CD4-positive, alpha-beta T cell (primary cell): ENCODE measurements at regions of chr9 and their contacts with region 1.

Region 1: DNA sequence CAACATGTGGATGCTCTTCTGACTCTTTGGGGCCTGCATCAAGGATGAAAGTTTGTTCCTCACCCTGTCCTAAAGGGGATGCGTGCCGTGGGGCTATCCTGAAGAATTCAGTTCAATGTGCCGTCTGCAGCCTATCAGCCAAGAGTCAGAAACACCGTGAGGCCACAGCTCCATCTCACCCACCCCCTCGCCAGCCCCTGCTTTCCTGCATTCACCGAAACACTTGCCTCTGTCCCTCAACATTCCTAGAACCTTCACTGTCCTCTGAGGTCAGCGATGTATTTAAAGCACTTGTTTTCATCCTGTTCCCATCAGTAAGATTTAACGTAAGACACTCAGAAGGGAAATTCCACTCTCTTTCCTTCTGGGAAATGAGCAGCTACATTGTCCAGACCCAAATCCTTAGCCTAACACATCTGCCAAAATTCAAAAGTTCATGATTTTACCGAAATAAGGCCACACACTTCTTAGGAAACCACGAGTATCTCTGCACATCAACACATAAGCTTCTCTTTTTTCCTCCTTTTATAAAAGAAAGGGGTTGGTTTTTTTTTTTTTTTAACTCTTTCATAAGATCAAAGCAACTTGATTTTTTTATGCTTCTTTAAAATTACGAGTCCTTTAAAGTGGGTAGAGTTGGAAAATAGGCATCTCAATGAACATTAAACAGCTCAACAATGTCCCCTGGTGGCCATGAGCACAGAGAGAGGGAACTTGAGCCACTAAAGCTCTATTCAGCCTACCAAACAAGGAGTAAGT is 100.7 kb downstream of the SUSD1 start:
- DNase-seq: peak; percentile 49 to 86 (median 66)
- ATAC-seq: peak; percentile 91
- H3K4me3 ChIP-seq: no peak overlapping the region
- H3K4me3 Mint-ChIP-seq: peak overlapping the region; percentile 17
- H3K27ac ChIP-seq: no peak overlapping the region
- H3K27ac Mint-ChIP-seq: peak overlapping the region; percentile 16
- H3K4me1 ChIP-seq: peaks cover 26% of the 10 kb centered on the region
- H3K4me1 Mint-ChIP-seq: peaks cover 33% of the 10 kb centered on the region
- H3K27me3 ChIP-seq: no peaks in the 10 kb centered on the region
- H3K27me3 Mint-ChIP-seq: no peaks in the 10 kb centered on the region
- CTCF ChIP-seq: peak; percentile 96

Region 2: DNA sequence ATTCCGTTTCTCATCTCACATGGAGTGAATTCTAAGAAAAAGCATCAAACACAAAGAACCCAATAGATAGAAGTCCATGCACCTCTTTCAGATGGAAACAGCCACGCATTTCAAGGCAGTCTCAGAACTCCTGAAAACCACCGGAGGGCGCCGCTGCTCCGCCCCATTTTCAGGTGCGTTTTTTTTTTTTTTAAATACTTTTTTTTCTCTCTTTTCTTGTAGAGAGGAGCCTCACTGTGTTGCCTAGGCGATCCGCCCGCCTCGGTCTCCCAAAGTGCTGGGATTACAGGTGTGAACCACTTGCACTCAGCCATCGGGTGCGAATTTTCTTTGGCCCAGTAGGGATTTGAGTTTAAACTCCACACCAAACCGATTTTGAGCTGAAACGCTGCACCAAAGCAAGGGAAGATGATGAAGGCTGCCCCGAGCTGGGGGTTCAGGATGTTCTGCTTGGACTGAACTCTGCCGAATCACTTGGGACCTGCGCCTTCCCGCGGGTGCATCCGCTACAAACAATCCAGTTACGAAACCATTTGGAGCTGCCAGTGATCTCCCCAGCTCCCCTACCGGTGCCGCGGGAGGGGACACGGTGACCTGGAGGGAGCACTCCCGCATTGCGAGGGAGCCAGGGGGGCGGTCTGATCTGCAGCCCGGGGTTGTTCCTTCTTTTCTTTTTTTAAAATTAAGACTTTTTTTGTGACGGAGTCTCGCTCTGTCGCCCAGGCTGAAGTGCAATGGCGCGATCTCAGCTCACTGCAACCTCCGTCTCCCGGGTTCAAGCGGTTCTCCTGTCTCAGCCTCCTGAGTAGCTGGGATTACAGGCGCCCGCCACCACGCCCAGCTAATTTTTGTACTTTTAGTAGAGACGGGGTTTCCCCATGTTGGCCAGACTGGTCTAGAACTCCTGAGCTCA is 476.4 kb before region 1 on chr9:
- CTCF ChIA-PET with region 1: interaction called, 10 read pairs
- POLR2A ChIA-PET with region 1: interaction called, 4 read pairs
- intact Hi-C with region 1: loop called (anchors 1 to 2 kb)
- DNase-seq: peak; percentile 29 to 84 (median 59)
- ATAC-seq: peak; percentile 75
- H3K4me3 ChIP-seq: peak overlapping the region; percentile 61
- H3K4me3 Mint-ChIP-seq: peak overlapping the region; percentile 94
- H3K27ac ChIP-seq: no peak overlapping the region
- H3K27ac Mint-ChIP-seq: peak overlapping the region; percentile 62
- H3K4me1 ChIP-seq: peaks cover 24% of the 10 kb centered on the region
- H3K4me1 Mint-ChIP-seq: peaks cover 34% of the 10 kb centered on the region
- H3K27me3 ChIP-seq: peaks cover 24 to 28% of the 10 kb centered on the region in 2 experiments
- H3K27me3 Mint-ChIP-seq: peaks cover 47% of the 10 kb centered on the region
- CTCF ChIP-seq: peak; percentile 78

Region 3: DNA sequence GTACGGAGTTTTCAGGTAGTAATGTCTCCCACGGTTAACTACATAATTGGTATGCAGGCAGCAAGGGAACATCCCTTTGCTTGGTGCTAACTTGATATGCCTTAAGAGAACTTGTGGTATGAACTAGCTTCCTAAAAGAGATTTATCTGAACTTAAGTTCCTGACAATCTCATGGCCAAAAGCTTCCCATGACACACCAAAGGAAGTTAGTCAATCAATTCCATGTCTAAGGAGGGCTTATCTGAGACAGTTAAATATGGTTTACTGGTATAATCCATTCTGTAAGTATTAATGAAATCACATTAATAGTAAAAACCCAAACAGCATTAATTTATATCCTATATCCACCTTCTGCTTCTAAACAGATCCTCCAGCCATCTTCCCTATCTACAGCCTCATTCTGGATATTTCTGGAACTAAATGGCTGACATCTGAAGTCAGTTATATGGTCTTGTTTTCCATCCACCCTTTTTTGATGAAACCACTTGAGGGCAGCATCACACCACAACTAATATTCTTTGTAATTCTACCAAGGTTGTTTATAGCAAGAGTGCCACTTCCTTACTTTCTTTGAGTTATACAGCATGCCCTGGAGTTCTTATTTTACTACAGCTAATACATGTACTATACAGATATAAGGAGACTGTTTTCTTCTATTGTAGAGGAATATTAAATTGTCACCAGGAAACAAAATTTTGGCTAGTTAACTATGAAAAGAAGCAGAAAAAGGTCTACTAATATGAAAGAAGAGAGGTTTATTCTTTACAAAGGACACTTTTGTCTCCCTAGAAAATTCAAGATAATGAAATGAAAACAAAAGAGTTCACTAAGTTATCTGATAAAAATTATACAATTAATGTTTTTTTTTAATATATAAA is 314.4 kb before region 1 on chr9:
- CTCF ChIA-PET with region 1: interaction called, 31 read pairs
- POLR2A ChIA-PET with region 1: interaction called, 7 read pairs
- intact Hi-C with region 1: loop called (anchors 1 kb)
- DNase-seq: peak in 12 of 14 experiments; percentile 6 to 81 (median 32)
- ATAC-seq: peak; percentile 85
- H3K4me3 ChIP-seq: no peak overlapping the region
- H3K4me3 Mint-ChIP-seq: no peak overlapping the region
- H3K27ac ChIP-seq: no peak overlapping the region
- H3K27ac Mint-ChIP-seq: no peak overlapping the region
- H3K4me1 ChIP-seq: no peaks in the 10 kb centered on the region
- H3K4me1 Mint-ChIP-seq: peaks cover 5% of the 10 kb centered on the region
- H3K27me3 ChIP-seq: no peaks in the 10 kb centered on the region
- H3K27me3 Mint-ChIP-seq: no peaks in the 10 kb centered on the region
- CTCF ChIP-seq: peak; percentile 88

Region 4: GRCh38 chr9:111902396-111903147 is 171.9 kb before region 1 on chr9:
- CTCF ChIA-PET with region 1: interaction called, 3 read pairs
- POLR2A ChIA-PET with region 1: interaction called, 24 read pairs
- intact Hi-C with region 1: loop called (anchors 5 to 10 kb)
- DNase-seq: no peak
- ATAC-seq: no peak
- H3K4me3 ChIP-seq: no peak overlapping the region
- H3K4me3 Mint-ChIP-seq: no peak overlapping the region
- H3K27ac ChIP-seq: no peak overlapping the region
- H3K27ac Mint-ChIP-seq: no peak overlapping the region
- H3K4me1 ChIP-seq: peaks cover 51% of the 10 kb centered on the region
- H3K4me1 Mint-ChIP-seq: peaks cover 35% of the 10 kb centered on the region
- H3K27me3 ChIP-seq: no peaks in the 10 kb centered on the region
- H3K27me3 Mint-ChIP-seq: no peaks in the 10 kb centered on the region
- CTCF ChIP-seq: no peak

Region 5: DNA sequence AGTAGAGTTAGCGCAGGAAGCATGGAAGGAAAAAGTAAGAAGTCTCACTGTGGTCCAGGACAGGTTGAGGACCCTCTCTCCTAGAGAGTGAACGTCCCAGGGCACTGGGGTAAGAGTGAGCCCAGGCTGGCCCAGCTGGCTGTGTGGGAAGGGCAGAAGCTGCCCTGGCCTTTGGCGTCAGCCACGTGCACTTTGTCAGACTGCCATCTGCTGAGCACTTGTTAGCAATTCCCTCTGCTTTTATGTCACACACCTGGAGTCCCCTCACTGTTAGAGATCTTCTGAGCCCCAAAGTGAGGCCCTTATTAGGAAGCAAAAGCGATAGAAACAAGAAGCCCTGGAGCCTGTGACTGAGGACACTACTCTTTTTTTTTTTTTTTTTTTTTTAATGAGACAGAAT is 98.7 kb before region 1 on chr9:
- CTCF ChIA-PET with region 1: no interaction called
- POLR2A ChIA-PET with region 1: no interaction called
- intact Hi-C with region 1: loop called in 1 of 2 experiments (anchors 5 kb)
- DNase-seq: peak in 6 of 14 experiments; percentile 12 to 51 (median 37)
- ATAC-seq: no peak
- H3K4me3 ChIP-seq: no peak overlapping the region
- H3K4me3 Mint-ChIP-seq: no peak overlapping the region
- H3K27ac ChIP-seq: no peak overlapping the region
- H3K27ac Mint-ChIP-seq: no peak overlapping the region
- H3K4me1 ChIP-seq: peaks cover 5% of the 10 kb centered on the region
- H3K4me1 Mint-ChIP-seq: peaks cover 12% of the 10 kb centered on the region
- H3K27me3 ChIP-seq: no peaks in the 10 kb centered on the region
- H3K27me3 Mint-ChIP-seq: no peaks in the 10 kb centered on the region
- CTCF ChIP-seq: no peak

Region 6: DNA sequence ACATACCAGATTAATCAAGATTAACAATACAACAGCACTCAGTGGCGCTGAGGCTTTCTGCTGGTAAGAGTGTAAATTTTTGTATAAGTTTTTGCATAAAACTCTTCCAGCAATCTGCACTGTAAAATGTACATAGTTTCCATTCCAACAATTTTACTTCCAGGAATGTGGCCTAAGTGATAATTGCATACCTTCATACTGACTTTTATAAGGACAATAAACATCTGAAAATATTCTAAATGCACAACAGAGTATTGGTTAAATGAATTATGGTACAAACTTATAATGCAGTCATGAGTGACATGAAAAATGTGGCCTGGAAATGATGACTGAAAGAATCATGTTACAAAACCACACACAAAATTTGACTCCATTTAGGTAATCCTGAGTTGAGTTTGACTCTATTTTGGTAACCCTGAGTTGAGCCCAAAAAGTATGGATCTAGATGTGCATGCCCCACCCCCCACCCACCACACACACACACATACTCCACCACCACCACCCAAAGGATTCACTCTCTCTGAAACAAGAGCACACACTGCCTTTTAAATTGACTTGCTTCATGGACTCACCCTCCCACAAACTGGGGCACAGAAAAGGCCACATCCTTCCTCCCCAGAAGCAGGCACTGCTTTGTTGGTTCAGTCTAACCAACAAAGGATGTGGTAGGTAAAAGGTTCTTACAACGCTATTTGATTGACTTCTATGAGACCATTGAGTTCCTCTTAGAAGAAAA is 37.0 kb before region 1 on chr9:
- CTCF ChIA-PET with region 1: interaction called, 4 read pairs
- POLR2A ChIA-PET with region 1: interaction called, 6 read pairs
- intact Hi-C with region 1: loop called in 1 of 2 experiments (anchors 5 kb)
- DNase-seq: peak; percentile 37 to 93 (median 62)
- ATAC-seq: peak; percentile 98
- H3K4me3 ChIP-seq: peak overlapping the region; percentile 9
- H3K4me3 Mint-ChIP-seq: peak overlapping the region; percentile 82
- H3K27ac ChIP-seq: no peak overlapping the region
- H3K27ac Mint-ChIP-seq: peak overlapping the region; percentile 68
- H3K4me1 ChIP-seq: peaks cover 54% of the 10 kb centered on the region
- H3K4me1 Mint-ChIP-seq: peaks cover 67% of the 10 kb centered on the region
- H3K27me3 ChIP-seq: no peaks in the 10 kb centered on the region
- H3K27me3 Mint-ChIP-seq: peaks cover 4% of the 10 kb centered on the region
- CTCF ChIP-seq: no peak

Region 7: GRCh38 chr9:112112941-112113681 is 38.7 kb after region 1 on chr9:
- CTCF ChIA-PET with region 1: no interaction called
- POLR2A ChIA-PET with region 1: no interaction called
- intact Hi-C with region 1: no loop called
- DNase-seq: peak in 12 of 14 experiments; percentile 2 to 55 (median 10)
- ATAC-seq: peak; percentile 60
- H3K4me3 ChIP-seq: no peak overlapping the region
- H3K4me3 Mint-ChIP-seq: no peak overlapping the region
- H3K27ac ChIP-seq: no peak overlapping the region
- H3K27ac Mint-ChIP-seq: no peak overlapping the region
- H3K4me1 ChIP-seq: no peaks in the 10 kb centered on the region
- H3K4me1 Mint-ChIP-seq: no peaks in the 10 kb centered on the region
- H3K27me3 ChIP-seq: no peaks in the 10 kb centered on the region
- H3K27me3 Mint-ChIP-seq: no peaks in the 10 kb centered on the region
- CTCF ChIP-seq: peak; percentile 65